Mammary epithelial cell (primary cell): ENCODE measurements at regions of chr15 and their contacts with region 1.

Region 1: GRCh38 chr15:62742409-62743171 is 300.0 kb upstream of the TPM1 start:
- DNase-seq: peak; percentile 70
- H3K4me3 ChIP-seq: no peak overlapping the region
- H3K27ac ChIP-seq: peak overlapping the region; percentile 38
- H3K4me1 ChIP-seq: peaks cover 55% of the 10 kb centered on the region
- H3K27me3 ChIP-seq: no peaks in the 10 kb centered on the region
- CTCF ChIP-seq: peak; percentile 83 to 85

Region 2: GRCh38 chr15:62606376-62607113 is 136.0 kb before region 1 on chr15:
- CTCF ChIA-PET with region 1: interaction called, 6 read pairs
- dilution Hi-C with region 1: no loop called
- in situ Hi-C with region 1: no loop called
- intact Hi-C with region 1: loop called (anchors 2 kb)
- DNase-seq: peak; percentile 97
- H3K4me3 ChIP-seq: no peak overlapping the region
- H3K27ac ChIP-seq: peak overlapping the region; percentile 69
- H3K4me1 ChIP-seq: peaks cover 39% of the 10 kb centered on the region
- H3K27me3 ChIP-seq: no peaks in the 10 kb centered on the region
- CTCF ChIP-seq: no peak

Region 3: DNA sequence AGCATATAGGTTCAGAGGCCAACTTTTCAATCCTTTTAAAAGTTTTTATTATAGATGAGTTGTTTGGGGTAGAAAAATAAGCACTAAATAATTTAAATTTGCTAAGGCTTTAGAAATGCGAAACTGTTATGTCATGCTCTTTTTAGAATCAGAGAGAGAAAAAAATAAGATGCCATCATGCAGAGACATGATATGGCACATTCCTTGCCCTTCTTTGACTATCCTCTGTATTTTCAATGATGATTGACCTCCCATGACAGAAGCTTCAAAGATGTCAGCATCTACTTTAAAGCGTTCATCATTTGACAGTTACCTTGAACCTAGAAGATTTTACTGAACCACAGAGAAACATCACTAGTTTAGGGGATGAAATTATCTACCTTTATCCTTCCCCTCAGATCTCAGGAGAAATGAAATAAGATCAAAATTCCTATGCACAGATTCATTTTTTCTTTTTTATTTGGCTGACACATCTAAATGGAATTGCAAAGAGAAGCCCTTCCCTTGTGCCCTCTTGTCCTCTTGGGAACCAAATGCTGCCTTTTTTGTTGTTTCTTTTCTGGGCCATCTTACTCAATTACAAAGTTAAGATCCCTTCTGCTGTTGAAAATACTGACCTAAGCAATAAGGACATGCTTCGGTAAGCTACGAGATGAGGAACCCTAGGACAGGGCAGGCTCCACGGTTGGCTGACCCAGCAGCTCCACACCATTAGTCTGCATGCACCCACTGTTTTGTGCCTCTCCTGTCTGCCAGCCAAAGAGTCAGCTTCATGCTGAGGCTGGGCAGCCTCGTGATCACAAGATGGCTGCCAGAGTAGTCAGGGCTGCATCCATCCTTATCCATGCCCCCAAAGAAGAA is 10.3 kb after region 1 on chr15:
- CTCF ChIA-PET with region 1: interaction called, 17 read pairs
- dilution Hi-C with region 1: no loop called
- in situ Hi-C with region 1: no loop called
- intact Hi-C with region 1: loop called (anchors 1 kb)
- DNase-seq: no peak
- H3K4me3 ChIP-seq: no peak overlapping the region
- H3K27ac ChIP-seq: peak overlapping the region; percentile 78
- H3K4me1 ChIP-seq: peaks cover 45% of the 10 kb centered on the region
- H3K27me3 ChIP-seq: no peaks in the 10 kb centered on the region
- CTCF ChIP-seq: no peak

Region 4: GRCh38 chr15:62758126-62758951 is 15.7 kb after region 1 on chr15:
- CTCF ChIA-PET with region 1: interaction called, 17 read pairs
- dilution Hi-C with region 1: no loop called
- in situ Hi-C with region 1: no loop called
- intact Hi-C with region 1: loop called (anchors 1 kb)
- DNase-seq: peak; percentile 89
- H3K4me3 ChIP-seq: peak overlapping the region; percentile 3 to 21 (median 5)
- H3K27ac ChIP-seq: peak overlapping the region; percentile 75
- H3K4me1 ChIP-seq: peaks cover 43% of the 10 kb centered on the region
- H3K27me3 ChIP-seq: no peaks in the 10 kb centered on the region
- CTCF ChIP-seq: no peak